Right ventricle myocardium inferior (tissue), 1 donor: ENCODE measurements at regions of chr12 and their contacts with region 1.

Region 1: GRCh38 chr12:55931780-55932550 is 1.0 kb downstream of the DGKA start:
- DNase-seq: peak; percentile 87
- ATAC-seq: peak; percentile 45

Region 2: GRCh38 chr12:55966408-55967281 is 34.7 kb after region 1 on chr12 and contains the start of gene CDK2:
- intact Hi-C with region 1: loop called (anchors 2 kb)
- DNase-seq: peak; percentile 95
- ATAC-seq: peak; percentile 95
- total RNA-seq, gene CDK2: 11.6 TPM